A673 (cell line): ENCODE measurements at regions of chr4 and their contacts with region 1.

Region 1: GRCh38 chr4:180664766-180665368 is 1578.3 kb upstream of the TENM3 start:
- DNase-seq: peak; percentile 95
- H3K4me3 ChIP-seq: no peak overlapping the region
- H3K27ac ChIP-seq: peak overlapping the region; percentile 39
- H3K4me1 ChIP-seq: peaks cover 28% of the 10 kb centered on the region
- H3K27me3 ChIP-seq: no peaks in the 10 kb centered on the region
- CTCF ChIP-seq: peak; percentile 84

Region 2: GRCh38 chr4:180058731-180059215 is 606.1 kb before region 1 on chr4:
- CTCF ChIA-PET with region 1: no interaction called
- POLR2A ChIA-PET with region 1: no interaction called
- intact Hi-C with region 1: loop called (anchors 2 kb)
- DNase-seq: peak; percentile 77
- H3K4me3 ChIP-seq: peak overlapping the region; percentile 58
- H3K27ac ChIP-seq: no peak overlapping the region
- H3K4me1 ChIP-seq: no peaks in the 10 kb centered on the region
- H3K27me3 ChIP-seq: peaks cover 38% of the 10 kb centered on the region
- CTCF ChIP-seq: no peak

Region 3: DNA sequence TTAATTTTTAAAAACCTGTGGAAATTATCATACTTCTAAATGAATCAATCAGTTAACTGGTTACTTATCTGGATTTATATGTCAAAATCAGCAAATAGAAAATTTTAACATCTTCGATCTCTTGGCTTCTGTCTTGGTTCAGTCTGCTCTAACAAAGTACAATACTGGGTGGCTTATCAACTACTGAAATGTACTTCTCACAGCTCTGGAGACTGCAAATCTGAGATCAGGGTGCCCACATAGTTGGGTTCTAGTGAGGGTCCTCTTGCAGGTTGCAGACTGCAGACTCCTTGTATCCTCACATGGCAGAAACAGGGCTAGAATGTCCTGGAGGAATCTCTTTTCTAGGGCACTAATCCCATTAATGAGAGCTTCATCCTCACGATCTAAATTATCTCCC is 273.3 kb before region 1 on chr4:
- CTCF ChIA-PET with region 1: no interaction called
- POLR2A ChIA-PET with region 1: interaction called, 24 read pairs
- intact Hi-C with region 1: no loop called
- DNase-seq: no peak
- H3K4me3 ChIP-seq: no peak overlapping the region
- H3K27ac ChIP-seq: no peak overlapping the region
- H3K4me1 ChIP-seq: peaks cover 11% of the 10 kb centered on the region
- H3K27me3 ChIP-seq: no peaks in the 10 kb centered on the region
- CTCF ChIP-seq: no peak

Region 4: GRCh38 chr4:180449395-180449956 is 215.4 kb before region 1 on chr4:
- CTCF ChIA-PET with region 1: interaction called, 5 read pairs
- POLR2A ChIA-PET with region 1: no interaction called
- intact Hi-C with region 1: loop called (anchors 1 kb)
- DNase-seq: peak; percentile 89
- H3K4me3 ChIP-seq: peak overlapping the region; percentile 34
- H3K27ac ChIP-seq: peak overlapping the region; percentile 13
- H3K4me1 ChIP-seq: peaks cover 19% of the 10 kb centered on the region
- H3K27me3 ChIP-seq: no peaks in the 10 kb centered on the region
- CTCF ChIP-seq: peak; percentile 94

Region 5: GRCh38 chr4:180564026-180564425 is 100.8 kb before region 1 on chr4:
- CTCF ChIA-PET with region 1: interaction called, 3 read pairs
- POLR2A ChIA-PET with region 1: interaction called, 3 read pairs
- intact Hi-C with region 1: loop called (anchors 2 kb)
- DNase-seq: peak; percentile 64
- H3K4me3 ChIP-seq: peak overlapping the region; percentile 48
- H3K27ac ChIP-seq: peak overlapping the region; percentile 92
- H3K4me1 ChIP-seq: peaks cover 61% of the 10 kb centered on the region
- H3K27me3 ChIP-seq: no peaks in the 10 kb centered on the region
- CTCF ChIP-seq: no peak

Region 6: DNA sequence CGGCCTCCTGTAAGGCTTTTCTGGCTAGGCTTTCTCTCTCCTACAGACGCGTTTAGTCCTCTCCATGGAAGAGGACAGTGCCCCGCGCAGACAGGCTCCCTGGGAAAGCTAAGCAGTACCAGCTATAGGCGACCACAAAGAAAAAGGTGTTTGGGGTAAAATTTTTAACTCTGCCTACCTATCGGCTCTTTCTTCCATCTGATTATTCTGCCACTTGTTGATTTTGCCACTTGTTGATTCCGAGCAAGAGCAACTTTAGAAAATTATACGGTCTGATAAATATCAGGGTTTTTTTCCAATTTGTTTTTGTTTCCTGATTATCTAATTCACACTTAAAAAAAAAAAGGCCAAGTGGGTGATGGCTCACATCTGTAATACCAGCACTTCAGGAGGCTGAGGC is 22.1 kb before region 1 on chr4:
- CTCF ChIA-PET with region 1: no interaction called
- POLR2A ChIA-PET with region 1: no interaction called
- intact Hi-C with region 1: no loop called
- DNase-seq: no peak
- H3K4me3 ChIP-seq: no peak overlapping the region
- H3K27ac ChIP-seq: no peak overlapping the region
- H3K4me1 ChIP-seq: peaks cover 4% of the 10 kb centered on the region
- H3K27me3 ChIP-seq: no peaks in the 10 kb centered on the region
- CTCF ChIP-seq: no peak

Region 7: DNA sequence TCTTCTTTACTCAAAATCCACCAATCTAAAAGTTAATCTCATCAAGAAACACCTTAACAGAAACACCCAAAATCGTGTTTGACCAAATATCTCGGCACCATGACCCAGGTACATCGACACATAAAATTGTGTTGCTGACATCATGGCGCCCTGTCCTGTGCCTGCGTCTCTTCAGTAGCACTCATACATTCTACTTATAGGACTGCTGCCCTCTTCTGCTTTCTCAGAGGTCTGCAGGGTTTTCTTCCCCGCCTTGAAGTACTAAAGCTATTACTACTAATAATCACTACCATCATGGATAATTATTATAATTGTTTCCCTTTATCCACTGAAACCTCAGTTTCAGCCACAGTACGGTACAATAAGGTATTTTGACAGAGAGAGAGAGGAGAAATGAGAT is 175.3 kb after region 1 on chr4:
- CTCF ChIA-PET with region 1: interaction called, 3 read pairs
- POLR2A ChIA-PET with region 1: no interaction called
- intact Hi-C with region 1: loop called (anchors 5 kb)
- DNase-seq: peak; percentile 24
- H3K4me3 ChIP-seq: no peak overlapping the region
- H3K27ac ChIP-seq: no peak overlapping the region
- H3K4me1 ChIP-seq: no peaks in the 10 kb centered on the region
- H3K27me3 ChIP-seq: no peaks in the 10 kb centered on the region
- CTCF ChIP-seq: peak; percentile 40

Region 8: DNA sequence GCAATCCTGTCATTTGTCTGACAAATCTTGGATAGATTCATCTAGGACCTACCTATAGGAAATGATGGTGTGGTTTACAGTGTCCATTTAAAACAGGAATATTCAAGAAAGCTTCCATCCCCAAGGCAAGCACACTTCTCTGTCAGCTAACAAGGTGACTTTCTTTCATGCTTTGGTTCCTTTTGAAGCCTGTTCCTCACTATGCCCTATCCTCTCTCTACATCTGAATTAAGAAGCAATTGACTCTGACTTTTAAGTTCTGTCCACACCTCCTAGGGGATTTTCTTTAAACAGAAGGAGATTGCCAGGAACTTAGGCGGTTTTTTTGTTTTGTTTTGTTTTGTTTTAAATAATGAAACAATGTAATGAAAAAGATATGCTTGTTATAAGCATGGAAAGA is 396.9 kb after region 1 on chr4:
- CTCF ChIA-PET with region 1: no interaction called
- POLR2A ChIA-PET with region 1: no interaction called
- intact Hi-C with region 1: no loop called
- DNase-seq: no peak
- H3K4me3 ChIP-seq: no peak overlapping the region
- H3K27ac ChIP-seq: no peak overlapping the region
- H3K4me1 ChIP-seq: no peaks in the 10 kb centered on the region
- H3K27me3 ChIP-seq: peaks cover 16% of the 10 kb centered on the region
- CTCF ChIP-seq: no peak

Region 9: DNA sequence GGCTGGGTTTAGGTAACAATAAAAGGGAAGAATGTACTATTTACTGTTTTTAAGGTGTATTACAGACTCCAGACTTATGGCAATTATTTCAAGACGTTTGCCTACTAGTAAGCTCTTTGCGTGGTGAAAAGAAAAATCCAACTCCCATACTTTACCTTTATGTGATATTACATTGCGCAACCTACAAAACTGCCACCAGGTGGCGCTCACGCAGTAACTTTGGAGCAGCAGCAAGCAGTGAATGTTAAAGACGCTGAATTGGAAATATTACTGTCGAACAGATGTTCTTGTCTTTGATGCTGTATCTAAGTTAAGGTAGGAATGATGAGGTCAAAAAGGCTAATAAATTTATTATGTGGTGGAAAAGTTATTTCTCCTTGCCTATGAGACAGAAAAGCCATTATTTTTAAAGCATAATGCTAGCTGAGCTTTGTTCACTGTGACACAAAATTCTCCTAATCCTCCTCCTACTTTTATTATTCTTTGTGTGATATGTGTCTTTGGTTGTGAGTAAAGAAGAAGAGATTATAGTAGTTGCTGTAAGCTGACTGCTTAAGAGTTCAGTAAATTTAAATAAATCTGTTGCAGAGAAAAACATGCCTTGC is 478.5 kb after region 1 on chr4:
- CTCF ChIA-PET with region 1: no interaction called
- POLR2A ChIA-PET with region 1: no interaction called
- intact Hi-C with region 1: loop called (anchors 10 kb)
- DNase-seq: peak; percentile 79
- H3K4me3 ChIP-seq: no peak overlapping the region
- H3K27ac ChIP-seq: no peak overlapping the region
- H3K4me1 ChIP-seq: no peaks in the 10 kb centered on the region
- H3K27me3 ChIP-seq: peaks cover 24% of the 10 kb centered on the region
- CTCF ChIP-seq: peak; percentile 92